ENCODE measurements at regions of chr17 and their contacts with region 1.

Region 1: DNA sequence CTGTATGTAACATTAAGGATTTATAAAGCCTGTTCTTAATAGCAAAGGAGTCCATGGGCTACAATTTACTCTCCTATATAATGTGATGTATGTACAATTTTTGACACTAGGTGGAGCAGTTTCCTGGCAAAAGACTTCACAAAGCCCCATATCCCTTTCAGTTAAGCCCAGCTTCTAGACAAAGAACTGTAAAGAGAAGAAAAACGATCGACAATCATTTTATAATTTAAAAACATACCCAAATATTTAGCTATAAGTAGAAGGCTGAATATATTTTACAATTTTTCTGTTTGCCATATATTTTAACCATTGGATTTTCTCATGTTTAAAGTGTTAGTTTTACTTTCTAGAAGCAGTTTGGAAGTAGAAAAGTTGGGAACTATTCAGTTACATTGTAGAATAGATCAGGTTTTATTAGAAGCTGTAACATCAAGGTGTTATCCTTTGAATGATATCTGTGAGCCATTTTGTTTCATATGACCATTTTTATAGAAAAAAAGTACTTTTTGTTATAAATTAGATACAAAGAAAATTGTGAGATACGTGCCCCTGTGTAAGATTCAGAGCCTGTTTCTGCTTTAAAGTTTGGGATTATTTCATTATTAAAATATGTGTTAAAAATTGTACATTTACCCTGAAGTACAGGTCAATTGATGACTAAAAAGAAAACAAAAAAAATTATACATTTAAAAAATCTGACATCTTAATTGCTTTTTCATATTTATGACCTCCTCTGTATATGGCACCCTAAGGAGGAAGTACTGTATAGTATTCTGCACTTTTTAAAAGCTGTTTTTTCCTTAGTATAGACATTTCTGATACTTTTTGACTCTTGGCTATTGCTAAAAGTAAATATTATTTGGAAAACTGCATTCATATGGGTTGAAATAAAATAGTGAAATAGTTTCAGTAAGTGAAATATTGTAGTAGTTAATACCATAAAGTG is 46.3 kb downstream of the VMP1 start:
- DNase-seq: no peak
- H3K4me3 Mint-ChIP-seq: peak overlapping the region; percentile 35
- H3K27ac Mint-ChIP-seq: peak overlapping the region; percentile 81
- H3K4me1 Mint-ChIP-seq: peaks cover 71% of the 10 kb centered on the region
- H3K27me3 Mint-ChIP-seq: no peaks in the 10 kb centered on the region

Region 2: GRCh38 chr17:59778996-59779395 is 25.2 kb after region 1 on chr17:
- CTCF ChIA-PET with region 1: interaction called, 88 read pairs
- POLR2A ChIA-PET with region 1: interaction called, 279 read pairs
- DNase-seq: no peak
- H3K4me3 Mint-ChIP-seq: no peak overlapping the region
- H3K27ac Mint-ChIP-seq: no peak overlapping the region
- H3K4me1 Mint-ChIP-seq: peaks cover 47% of the 10 kb centered on the region
- H3K27me3 Mint-ChIP-seq: no peaks in the 10 kb centered on the region

Region 3: DNA sequence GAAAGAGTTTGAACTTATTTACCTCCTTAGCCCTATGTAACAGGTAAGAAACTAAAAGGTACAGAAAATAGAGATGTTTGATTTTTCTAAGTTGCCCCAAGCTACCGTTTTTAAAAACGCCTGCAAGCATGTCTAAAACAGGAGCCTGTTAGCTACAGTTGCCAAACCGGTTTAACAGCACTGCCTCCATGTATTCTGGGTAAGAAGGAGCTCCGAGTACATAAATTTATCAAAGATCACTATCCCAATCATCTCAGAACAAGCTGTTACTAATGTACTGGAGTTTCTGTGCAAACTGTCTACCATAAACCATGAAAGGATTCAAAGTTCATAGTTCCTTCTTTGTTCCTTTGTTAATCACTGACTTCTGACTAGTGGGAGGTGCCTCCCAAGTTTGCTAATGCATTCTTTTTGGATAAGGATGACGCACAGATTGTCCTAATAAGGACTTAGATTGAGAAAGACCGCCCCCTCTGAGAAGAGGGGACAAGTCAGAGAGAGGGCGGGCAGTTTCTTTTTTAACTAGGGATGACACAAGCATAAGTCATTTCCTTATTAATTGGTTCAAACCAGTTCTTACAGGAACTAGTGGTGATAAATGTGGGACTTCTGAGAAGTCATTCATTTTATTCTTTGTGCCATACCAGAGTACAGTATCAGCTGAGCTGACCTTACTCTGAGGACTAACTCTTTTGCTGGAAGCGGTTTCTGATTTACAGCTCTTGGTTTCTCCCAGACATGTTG is 83.7 kb after region 1 on chr17:
- CTCF ChIA-PET with region 1: interaction called, 52 read pairs
- POLR2A ChIA-PET with region 1: interaction called, 277 read pairs
- DNase-seq: peak; percentile 77
- H3K4me3 Mint-ChIP-seq: peak overlapping the region; percentile 100
- H3K27ac Mint-ChIP-seq: peak overlapping the region; percentile 99
- H3K4me1 Mint-ChIP-seq: peaks cover 37% of the 10 kb centered on the region
- H3K27me3 Mint-ChIP-seq: no peaks in the 10 kb centered on the region

Region 4: DNA sequence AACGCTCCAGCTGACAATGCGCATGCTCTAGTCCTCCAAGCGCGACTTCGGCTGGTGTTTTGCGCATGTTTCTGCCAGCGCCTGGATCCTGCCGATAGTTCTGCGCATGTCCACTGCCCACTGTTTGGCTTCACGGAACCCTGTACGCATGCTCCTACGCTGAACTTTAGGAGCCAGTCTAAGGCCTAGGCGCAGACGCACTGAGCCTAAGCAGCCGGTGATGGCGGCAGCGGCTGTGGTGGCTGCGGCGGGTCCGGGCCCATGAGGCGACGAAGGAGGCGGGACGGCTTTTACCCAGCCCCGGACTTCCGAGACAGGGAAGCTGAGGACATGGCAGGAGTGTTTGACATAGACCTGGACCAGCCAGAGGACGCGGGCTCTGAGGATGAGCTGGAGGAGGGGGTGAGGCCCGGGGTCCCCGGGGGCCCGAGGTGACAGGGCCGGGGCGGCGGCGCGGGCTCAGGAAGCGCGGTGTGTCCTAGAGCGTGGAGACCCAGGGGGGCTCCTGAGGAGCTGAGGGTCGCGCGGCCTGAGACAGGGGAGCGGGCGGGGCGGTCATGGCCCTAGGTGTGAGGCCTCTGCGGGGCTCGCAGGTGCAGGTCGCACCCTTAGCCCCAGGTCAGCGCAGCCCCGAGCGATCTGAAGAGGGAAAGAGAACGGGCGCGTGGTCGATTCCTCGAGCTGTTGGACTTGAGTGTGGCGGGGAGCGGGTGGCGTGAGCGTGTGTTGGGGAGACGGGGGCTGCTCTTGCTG is 139.3 kb after region 1 on chr17 and contains the starts of genes RPS6KB1 and TUBD1:
- CTCF ChIA-PET with region 1: interaction called, 9 read pairs
- POLR2A ChIA-PET with region 1: interaction called, 21 read pairs
- DNase-seq: peak; percentile 98
- H3K4me3 Mint-ChIP-seq: peak within 1 kb of the TSS; percentile 100
- H3K27ac Mint-ChIP-seq: peak within 1 kb of the TSS; percentile 96
- H3K4me1 Mint-ChIP-seq: peaks cover 56% of the 10 kb centered on the region
- H3K27me3 Mint-ChIP-seq: no peaks in the 10 kb centered on the region
- total RNA-seq, gene RPS6KB1: 44.3 to 50.1 TPM
- total RNA-seq, gene TUBD1: 11.4 to 11.7 TPM

Region 5: GRCh38 chr17:60036796-60037612 is 283.2 kb after region 1 on chr17:
- CTCF ChIA-PET with region 1: interaction called, 11 read pairs
- POLR2A ChIA-PET with region 1: no interaction called
- DNase-seq: peak; percentile 75
- H3K4me3 Mint-ChIP-seq: no peak overlapping the region
- H3K27ac Mint-ChIP-seq: no peak overlapping the region
- H3K4me1 Mint-ChIP-seq: peaks cover 7% of the 10 kb centered on the region
- H3K27me3 Mint-ChIP-seq: peaks cover 22% of the 10 kb centered on the region